Mammary epithelial cell (primary cell): ENCODE measurements at regions of chr19 and their contacts with region 1.

Region 1: GRCh38 chr19:47296036-47296435 is 13.6 kb upstream of the C5AR1 start:
- DNase-seq: peak; percentile 63
- H3K4me3 ChIP-seq: no peak overlapping the region
- H3K27ac ChIP-seq: no peak overlapping the region
- H3K4me1 ChIP-seq: no peaks in the 10 kb centered on the region
- H3K27me3 ChIP-seq: no peaks in the 10 kb centered on the region
- CTCF ChIP-seq: peak; percentile 51 to 76

Region 2: GRCh38 chr19:47112997-47113849 is 182.8 kb before region 1 on chr19 and contains the start of gene ZC3H4:
- CTCF ChIA-PET with region 1: no interaction called
- dilution Hi-C with region 1: no loop called
- in situ Hi-C with region 1: no loop called
- intact Hi-C with region 1: no loop called
- DNase-seq: peak; percentile 99
- H3K4me3 ChIP-seq: peak within 1 kb of the TSS; percentile 77 to 96 (median 81)
- H3K27ac ChIP-seq: peak within 1 kb of the TSS; percentile 99
- H3K4me1 ChIP-seq: peaks cover 20% of the 10 kb centered on the region
- H3K27me3 ChIP-seq: no peaks in the 10 kb centered on the region
- CTCF ChIP-seq: no peak
- total RNA-seq, gene ZC3H4: 13.8 to 57.8 TPM

Region 3: GRCh38 chr19:47348819-47349795 is 53.1 kb after region 1 on chr19 and contains the start of gene DHX34:
- CTCF ChIA-PET with region 1: interaction called, 6 read pairs
- dilution Hi-C with region 1: loop called (anchors 5 kb)
- in situ Hi-C with region 1: no loop called
- intact Hi-C with region 1: no loop called
- DNase-seq: peak; percentile 97
- H3K4me3 ChIP-seq: peak within 1 kb of the TSS; percentile 74 to 94 (median 78)
- H3K27ac ChIP-seq: peak within 1 kb of the TSS; percentile 59
- H3K4me1 ChIP-seq: no peaks in the 10 kb centered on the region
- H3K27me3 ChIP-seq: no peaks in the 10 kb centered on the region
- CTCF ChIP-seq: peak; percentile 90 to 99
- total RNA-seq, gene DHX34: 10.5 to 22.4 TPM

Region 4: DNA sequence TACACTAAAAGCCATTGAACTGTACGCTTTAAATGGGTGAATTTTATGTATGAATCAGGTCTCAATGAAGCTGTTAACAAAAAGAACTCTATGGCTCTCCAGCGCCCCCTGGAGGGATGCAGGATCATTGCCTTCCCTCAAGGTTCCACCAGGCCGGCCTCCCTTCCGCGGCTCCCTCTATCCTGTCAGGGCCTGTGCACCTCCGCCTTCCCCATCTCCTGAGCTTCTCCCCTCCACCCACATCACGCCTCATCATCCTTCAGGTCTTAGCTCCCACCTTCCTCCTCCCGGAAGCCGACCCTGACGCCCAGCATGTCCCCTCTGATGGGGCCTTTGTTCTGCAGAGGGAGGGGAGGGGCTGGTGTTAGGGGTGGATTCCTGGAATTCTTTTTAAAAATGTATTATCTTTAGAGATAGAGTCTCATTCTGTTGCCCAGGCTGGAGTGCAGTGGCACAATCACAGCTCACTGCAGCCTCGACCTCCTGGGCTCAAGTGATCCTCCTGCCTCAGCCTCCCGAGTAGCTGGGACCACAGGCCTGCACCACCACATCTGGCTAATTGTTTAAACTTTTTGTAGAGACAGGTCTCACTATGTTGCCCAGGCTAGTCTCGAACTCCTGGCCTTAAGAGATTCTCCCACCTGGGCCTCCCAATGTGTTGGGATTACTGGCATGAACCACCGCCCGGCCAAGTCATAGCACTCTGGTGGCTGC is 95.6 kb after region 1 on chr19:
- CTCF ChIA-PET with region 1: no interaction called
- dilution Hi-C with region 1: no loop called
- in situ Hi-C with region 1: loop called in 1 of 2 experiments (anchors 5 kb)
- intact Hi-C with region 1: loop called (anchors 1 kb)
- DNase-seq: peak; percentile 51
- H3K4me3 ChIP-seq: no peak overlapping the region
- H3K27ac ChIP-seq: no peak overlapping the region
- H3K4me1 ChIP-seq: no peaks in the 10 kb centered on the region
- H3K27me3 ChIP-seq: no peaks in the 10 kb centered on the region
- CTCF ChIP-seq: peak; percentile 90 to 91

Region 5: DNA sequence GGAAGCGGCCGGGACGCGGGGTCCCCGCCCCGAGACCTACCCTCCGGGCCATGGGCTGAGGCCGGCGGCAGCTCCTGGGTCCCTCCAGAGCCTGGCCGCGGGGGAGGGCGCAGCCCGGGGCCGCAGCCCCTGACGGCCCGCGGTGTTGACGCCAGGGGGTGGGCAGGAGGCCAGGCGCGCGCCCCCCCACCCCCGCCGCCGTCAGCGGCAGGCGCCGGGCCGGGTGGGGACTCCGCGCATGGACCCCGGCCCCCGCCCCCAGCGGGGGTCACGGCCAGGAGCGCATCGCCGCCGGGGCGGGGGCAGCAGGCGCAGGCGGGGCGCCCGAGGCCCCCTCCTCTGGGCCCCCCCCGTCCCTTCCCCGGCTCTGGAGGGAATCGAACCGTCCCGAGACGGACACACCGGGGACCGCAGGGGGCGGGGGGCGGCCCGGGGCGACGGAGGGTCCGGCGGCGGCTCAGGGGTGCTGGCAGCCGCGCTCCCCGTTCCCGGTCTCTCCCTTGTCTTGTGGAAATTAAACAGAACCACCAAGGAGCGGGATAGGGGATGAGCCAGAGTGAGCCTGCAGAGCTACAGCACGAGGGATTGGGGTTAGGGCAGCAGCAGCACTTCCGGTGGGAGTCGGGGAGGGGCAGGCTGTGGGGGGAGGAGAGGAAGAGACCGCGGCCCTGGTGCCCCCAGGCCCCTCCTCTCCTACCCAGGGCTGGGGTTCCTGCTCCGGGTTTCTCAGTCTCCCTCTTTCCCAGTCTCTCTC is 123.2 kb after region 1 on chr19 and contains the start of gene MEIS3:
- CTCF ChIA-PET with region 1: no interaction called
- dilution Hi-C with region 1: loop called (anchors 5 kb)
- in situ Hi-C with region 1: no loop called
- intact Hi-C with region 1: no loop called
- DNase-seq: no peak
- H3K4me3 ChIP-seq: peak within 1 kb of the TSS; percentile 17 to 41 (median 34)
- H3K27ac ChIP-seq: no peak within 1 kb of the TSS
- H3K4me1 ChIP-seq: no peaks in the 10 kb centered on the region
- H3K27me3 ChIP-seq: peaks cover 52% of the 10 kb centered on the region
- CTCF ChIP-seq: no peak
- total RNA-seq, gene MEIS3: 7.0 to 25.9 TPM

Region 6: DNA sequence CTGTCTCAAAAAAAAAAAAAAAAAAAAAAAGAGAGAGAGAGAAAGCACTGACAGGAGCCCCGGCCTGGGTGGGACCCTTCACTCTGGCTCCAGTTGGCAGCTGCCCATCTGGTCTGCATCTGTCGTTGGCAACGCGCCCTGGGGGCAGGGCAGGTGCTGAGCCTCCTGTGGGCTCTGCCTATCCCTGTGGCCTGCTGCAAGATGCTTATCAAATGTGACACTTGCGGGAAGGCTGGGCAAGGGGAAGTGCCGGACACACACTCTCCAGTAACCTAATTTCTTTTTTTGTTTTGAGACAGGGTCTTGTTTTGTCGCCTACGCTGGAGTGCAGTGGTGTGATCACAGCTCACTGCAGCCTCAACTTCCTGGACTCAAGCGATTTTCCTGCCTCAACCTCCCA is 198.7 kb after region 1 on chr19:
- CTCF ChIA-PET with region 1: no interaction called
- dilution Hi-C with region 1: loop called (anchors 5 kb)
- in situ Hi-C with region 1: no loop called
- intact Hi-C with region 1: no loop called
- DNase-seq: no peak
- H3K4me3 ChIP-seq: no peak overlapping the region
- H3K27ac ChIP-seq: no peak overlapping the region
- H3K4me1 ChIP-seq: no peaks in the 10 kb centered on the region
- H3K27me3 ChIP-seq: no peaks in the 10 kb centered on the region
- CTCF ChIP-seq: no peak